CD4-positive, alpha-beta memory T cell (primary cell): ENCODE measurements at regions of chr9 and their contacts with region 1.

Region 1: GRCh38 chr9:70639853-70640814 is 225.7 kb upstream of the KLF9 start:
- DNase-seq: peak in 4 of 5 donors; percentile 15 to 40 (median 18)
- H3K4me3 ChIP-seq: no peak overlapping the region
- H3K4me3 Mint-ChIP-seq: no peak overlapping the region
- H3K27ac ChIP-seq: no peak overlapping the region
- H3K27ac Mint-ChIP-seq: no peak overlapping the region
- H3K4me1 ChIP-seq: no peaks in the 10 kb centered on the region
- H3K4me1 Mint-ChIP-seq: no peaks in the 10 kb centered on the region
- H3K27me3 ChIP-seq: no peaks in the 10 kb centered on the region
- H3K27me3 Mint-ChIP-seq: peaks cover 17 to 18% of the 10 kb centered on the region in 2 donors

Region 2: GRCh38 chr9:70427161-70427945 is 212.8 kb before region 1 on chr9:
- CTCF ChIA-PET with region 1: no interaction called
- POLR2A ChIA-PET with region 1: no interaction called
- intact Hi-C with region 1: no loop called
- DNase-seq: no peak
- H3K4me3 ChIP-seq: no peak overlapping the region
- H3K4me3 Mint-ChIP-seq: no peak overlapping the region
- H3K27ac ChIP-seq: no peak overlapping the region
- H3K27ac Mint-ChIP-seq: peak overlapping the region in 1 of 7 donors; percentile 49
- H3K4me1 ChIP-seq: peaks cover 5% of the 10 kb centered on the region
- H3K4me1 Mint-ChIP-seq: peaks cover 6 to 17% (median 10%) of the 10 kb centered on the region in 4 donors
- H3K27me3 ChIP-seq: no peaks in the 10 kb centered on the region
- H3K27me3 Mint-ChIP-seq: no peaks in the 10 kb centered on the region

Region 3: DNA sequence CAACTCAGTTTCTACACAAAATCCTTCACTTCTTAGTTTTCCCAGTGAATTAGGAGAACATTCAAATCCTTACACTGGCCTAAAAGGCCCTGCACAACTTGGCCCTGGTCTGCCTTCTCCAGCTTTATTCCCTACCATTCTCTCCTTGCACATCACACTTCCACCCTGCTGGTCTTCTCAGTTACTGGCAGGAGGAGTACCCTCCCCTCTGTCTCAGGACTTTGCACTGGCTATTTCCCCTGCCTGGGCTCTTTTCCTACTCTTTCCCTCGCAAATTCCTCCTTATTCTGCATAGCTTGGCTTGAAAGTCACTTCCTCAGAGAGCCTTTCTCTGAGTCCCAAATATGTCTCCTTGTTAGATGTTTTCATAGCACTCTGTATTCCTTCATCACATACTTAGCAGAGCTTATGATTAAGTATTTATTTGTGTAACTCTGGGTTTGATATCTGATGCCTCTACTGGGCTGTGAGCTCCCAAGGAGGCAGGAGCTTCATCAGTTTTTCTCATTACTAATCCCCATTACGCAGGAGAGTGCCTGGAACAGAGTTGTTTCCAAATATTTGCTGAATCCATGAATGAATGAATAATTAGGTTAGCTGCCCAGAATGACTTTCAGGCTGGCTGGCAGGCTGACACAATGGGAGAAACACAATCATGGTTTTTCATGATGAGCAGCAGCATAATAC is 65.8 kb before region 1 on chr9:
- CTCF ChIA-PET with region 1: no interaction called
- POLR2A ChIA-PET with region 1: no interaction called
- intact Hi-C with region 1: no loop called
- DNase-seq: no peak
- H3K4me3 ChIP-seq: no peak overlapping the region
- H3K4me3 Mint-ChIP-seq: peak overlapping the region in 1 of 8 donors; percentile 2
- H3K27ac ChIP-seq: no peak overlapping the region
- H3K27ac Mint-ChIP-seq: no peak overlapping the region
- H3K4me1 ChIP-seq: no peaks in the 10 kb centered on the region
- H3K4me1 Mint-ChIP-seq: peaks cover 0 to 4% (median under 1%) of the 10 kb centered on the region in 4 donors
- H3K27me3 ChIP-seq: no peaks in the 10 kb centered on the region
- H3K27me3 Mint-ChIP-seq: no peaks in the 10 kb centered on the region

Region 4: DNA sequence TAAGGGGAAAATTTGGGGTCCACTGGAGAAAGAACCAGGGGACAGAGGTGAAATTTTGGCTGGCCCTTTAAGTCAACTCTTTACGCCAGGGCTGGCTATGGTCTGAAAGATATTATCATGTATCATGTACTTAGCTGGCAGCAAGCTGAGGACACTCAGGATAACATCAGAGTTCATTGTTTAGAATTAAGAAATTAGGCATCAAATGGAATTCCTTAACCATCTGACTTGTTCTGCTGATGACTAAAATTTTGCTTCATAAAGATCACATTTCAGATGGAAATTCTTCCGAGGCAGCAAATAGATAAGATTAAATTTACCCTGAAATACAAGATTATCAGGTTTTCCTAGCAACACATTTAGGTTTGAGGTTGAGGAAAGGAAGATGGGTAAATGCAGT is 43.7 kb after region 1 on chr9:
- CTCF ChIA-PET with region 1: no interaction called
- POLR2A ChIA-PET with region 1: no interaction called
- intact Hi-C with region 1: no loop called
- DNase-seq: no peak
- H3K4me3 ChIP-seq: no peak overlapping the region
- H3K4me3 Mint-ChIP-seq: no peak overlapping the region
- H3K27ac ChIP-seq: no peak overlapping the region
- H3K27ac Mint-ChIP-seq: no peak overlapping the region
- H3K4me1 ChIP-seq: no peaks in the 10 kb centered on the region
- H3K4me1 Mint-ChIP-seq: no peaks in the 10 kb centered on the region
- H3K27me3 ChIP-seq: no peaks in the 10 kb centered on the region
- H3K27me3 Mint-ChIP-seq: peaks cover 5 to 9% of the 10 kb centered on the region in 2 donors

Region 5: DNA sequence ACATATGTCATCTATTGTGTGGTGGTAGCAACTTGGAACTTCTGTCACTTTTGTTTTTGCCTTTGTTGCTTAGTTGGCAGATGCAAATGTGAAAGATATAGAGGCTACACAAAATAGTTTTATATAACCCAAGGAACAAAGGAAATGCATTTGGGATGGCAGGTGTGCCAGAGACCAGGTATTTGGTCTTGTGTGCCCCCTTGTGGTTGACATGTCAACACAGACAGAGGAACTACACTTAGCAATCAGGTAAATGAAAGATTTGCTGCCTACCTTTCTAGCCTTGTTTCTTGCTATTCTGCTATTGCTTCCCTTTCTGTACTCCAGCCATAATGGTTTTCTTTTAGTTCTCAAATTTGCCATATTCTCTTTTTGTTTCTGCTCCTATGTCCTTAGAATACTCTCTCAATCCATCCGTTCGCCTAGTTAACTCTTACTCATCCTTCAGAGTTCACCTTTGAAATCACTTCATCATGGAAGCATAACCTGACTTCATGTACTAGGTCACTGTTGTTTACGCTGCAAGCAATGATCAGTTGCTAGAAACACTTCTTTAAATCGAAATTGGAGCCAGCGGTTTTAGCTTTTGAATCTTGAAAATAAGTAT is 361.7 kb after region 1 on chr9:
- CTCF ChIA-PET with region 1: interaction called, 16 read pairs
- POLR2A ChIA-PET with region 1: no interaction called
- intact Hi-C with region 1: no loop called
- DNase-seq: peak in 1 of 5 donors; percentile 5
- H3K4me3 ChIP-seq: no peak overlapping the region
- H3K4me3 Mint-ChIP-seq: no peak overlapping the region
- H3K27ac ChIP-seq: no peak overlapping the region
- H3K27ac Mint-ChIP-seq: no peak overlapping the region
- H3K4me1 ChIP-seq: no peaks in the 10 kb centered on the region
- H3K4me1 Mint-ChIP-seq: no peaks in the 10 kb centered on the region
- H3K27me3 ChIP-seq: no peaks in the 10 kb centered on the region
- H3K27me3 Mint-ChIP-seq: no peaks in the 10 kb centered on the region

Region 6: GRCh38 chr9:71249729-71250317 is 609.7 kb after region 1 on chr9:
- CTCF ChIA-PET with region 1: interaction called, 22 read pairs
- POLR2A ChIA-PET with region 1: no interaction called
- intact Hi-C with region 1: no loop called
- DNase-seq: peak in 2 of 5 donors; percentile 6 to 12
- H3K4me3 ChIP-seq: no peak overlapping the region
- H3K4me3 Mint-ChIP-seq: no peak overlapping the region
- H3K27ac ChIP-seq: no peak overlapping the region
- H3K27ac Mint-ChIP-seq: no peak overlapping the region
- H3K4me1 ChIP-seq: no peaks in the 10 kb centered on the region
- H3K4me1 Mint-ChIP-seq: no peaks in the 10 kb centered on the region
- H3K27me3 ChIP-seq: no peaks in the 10 kb centered on the region
- H3K27me3 Mint-ChIP-seq: peaks cover 0 to 8% of the 10 kb centered on the region in 2 donors